Activated B cell treated with CpG ODN at 0.5 μM for 24 hours (primary cell): ENCODE measurements at regions of chr2 and their contacts with region 1.

Region 1: GRCh38 chr2:9555297-9556141 is at the start of gene ADAM17:
- DNase-seq: peak; percentile 92
- ATAC-seq: peak; percentile 90
- H3K4me3 Mint-ChIP-seq: peak within 1 kb of the TSS; percentile 96
- H3K27ac Mint-ChIP-seq: peak within 1 kb of the TSS; percentile 98
- H3K4me1 Mint-ChIP-seq: peaks cover 54% of the 10 kb centered on the region
- H3K27me3 Mint-ChIP-seq: no peaks in the 10 kb centered on the region
- CTCF ChIP-seq: no peak
- total RNA-seq, gene ADAM17: 34.3 and 39.5 TPM in 2 replicates

Region 2: GRCh38 chr2:9423100-9423921 is 132.2 kb before region 1 on chr2 and contains the starts of genes CPSF3 and ITGB1BP1:
- CTCF ChIA-PET with region 1: no interaction called
- POLR2A ChIA-PET with region 1: interaction called, 13 read pairs
- intact Hi-C with region 1: loop called (anchors 1 kb)
- DNase-seq: peak; percentile 96
- ATAC-seq: peak; percentile 86
- H3K4me3 Mint-ChIP-seq: no peak within 1 kb of the TSS
- H3K27ac Mint-ChIP-seq: peak within 1 kb of the TSS; percentile 91
- H3K4me1 Mint-ChIP-seq: peaks cover 22% of the 10 kb centered on the region
- H3K27me3 Mint-ChIP-seq: no peaks in the 10 kb centered on the region
- CTCF ChIP-seq: no peak
- total RNA-seq, gene CPSF3: 44.0 and 44.6 TPM in 2 replicates
- total RNA-seq, gene ITGB1BP1: 39.6 and 40.5 TPM in 2 replicates

Region 3: GRCh38 chr2:9518163-9518562 is 37.4 kb before region 1 on chr2:
- CTCF ChIA-PET with region 1: no interaction called
- POLR2A ChIA-PET with region 1: interaction called, 10 read pairs
- intact Hi-C with region 1: no loop called
- DNase-seq: no peak
- ATAC-seq: no peak
- H3K4me3 Mint-ChIP-seq: no peak overlapping the region
- H3K27ac Mint-ChIP-seq: no peak overlapping the region
- H3K4me1 Mint-ChIP-seq: no peaks in the 10 kb centered on the region
- H3K27me3 Mint-ChIP-seq: no peaks in the 10 kb centered on the region
- CTCF ChIP-seq: no peak

Region 4: DNA sequence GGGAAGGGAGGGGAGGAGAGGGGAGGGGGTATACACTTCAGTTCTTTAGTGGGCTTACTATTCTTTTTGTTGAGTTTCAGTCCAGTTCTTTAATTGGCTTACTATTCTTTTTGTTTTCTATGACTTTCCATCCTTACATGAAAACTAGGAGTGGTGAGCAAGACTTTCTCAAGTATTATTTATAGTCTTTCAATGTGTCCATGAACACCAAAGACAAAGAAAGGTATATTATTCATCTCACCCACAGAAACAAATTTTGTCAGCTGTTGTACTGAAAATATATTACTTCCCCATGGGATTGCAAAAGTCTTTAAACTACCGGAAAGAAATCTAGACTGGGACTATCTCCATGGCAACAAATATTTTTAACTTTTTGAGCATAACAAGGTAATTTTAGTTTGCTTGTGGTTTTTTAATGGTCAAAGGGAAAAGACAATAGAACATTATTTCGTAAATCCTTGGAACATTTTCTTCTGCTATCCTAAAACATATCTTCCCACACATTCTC is 17.5 kb before region 1 on chr2:
- CTCF ChIA-PET with region 1: interaction called, 17 read pairs
- POLR2A ChIA-PET with region 1: interaction called, 55 read pairs
- intact Hi-C with region 1: loop called (anchors 1 kb)
- DNase-seq: no peak
- ATAC-seq: no peak
- H3K4me3 Mint-ChIP-seq: peak overlapping the region; percentile 50
- H3K27ac Mint-ChIP-seq: peak overlapping the region; percentile 78
- H3K4me1 Mint-ChIP-seq: peaks cover 75% of the 10 kb centered on the region
- H3K27me3 Mint-ChIP-seq: no peaks in the 10 kb centered on the region
- CTCF ChIP-seq: no peak

Region 5: GRCh38 chr2:9613291-9613690 is 57.8 kb after region 1 on chr2:
- CTCF ChIA-PET with region 1: no interaction called
- POLR2A ChIA-PET with region 1: interaction called, 31 read pairs
- intact Hi-C with region 1: loop called (anchors 1 kb)
- DNase-seq: no peak
- ATAC-seq: no peak
- H3K4me3 Mint-ChIP-seq: no peak overlapping the region
- H3K27ac Mint-ChIP-seq: no peak overlapping the region
- H3K4me1 Mint-ChIP-seq: peaks cover 78% of the 10 kb centered on the region
- H3K27me3 Mint-ChIP-seq: no peaks in the 10 kb centered on the region
- CTCF ChIP-seq: no peak

Region 6: GRCh38 chr2:9703085-9703641 is 147.6 kb after region 1 on chr2:
- CTCF ChIA-PET with region 1: no interaction called
- POLR2A ChIA-PET with region 1: no interaction called
- intact Hi-C with region 1: no loop called
- DNase-seq: no peak
- ATAC-seq: no peak
- H3K4me3 Mint-ChIP-seq: no peak overlapping the region
- H3K27ac Mint-ChIP-seq: no peak overlapping the region
- H3K4me1 Mint-ChIP-seq: peaks cover 4% of the 10 kb centered on the region
- H3K27me3 Mint-ChIP-seq: peaks cover 7% of the 10 kb centered on the region
- CTCF ChIP-seq: no peak

Region 7: GRCh38 chr2:9951272-9951972 is 395.9 kb after region 1 on chr2 and contains the start of gene GRHL1:
- CTCF ChIA-PET with region 1: no interaction called
- POLR2A ChIA-PET with region 1: no interaction called
- intact Hi-C with region 1: loop called (anchors 5 kb)
- DNase-seq: peak; percentile 89
- ATAC-seq: peak; percentile 96
- H3K4me3 Mint-ChIP-seq: peak within 1 kb of the TSS; percentile 84
- H3K27ac Mint-ChIP-seq: peak within 1 kb of the TSS; percentile 65
- H3K4me1 Mint-ChIP-seq: peaks cover 14% of the 10 kb centered on the region
- H3K27me3 Mint-ChIP-seq: peaks cover 37% of the 10 kb centered on the region
- CTCF ChIP-seq: no peak
- total RNA-seq, gene GRHL1: 0.39 and 0.95 TPM in 2 replicates